ENCODE measurements at regions of chr3 and their contacts with region 1.

Region 1: DNA sequence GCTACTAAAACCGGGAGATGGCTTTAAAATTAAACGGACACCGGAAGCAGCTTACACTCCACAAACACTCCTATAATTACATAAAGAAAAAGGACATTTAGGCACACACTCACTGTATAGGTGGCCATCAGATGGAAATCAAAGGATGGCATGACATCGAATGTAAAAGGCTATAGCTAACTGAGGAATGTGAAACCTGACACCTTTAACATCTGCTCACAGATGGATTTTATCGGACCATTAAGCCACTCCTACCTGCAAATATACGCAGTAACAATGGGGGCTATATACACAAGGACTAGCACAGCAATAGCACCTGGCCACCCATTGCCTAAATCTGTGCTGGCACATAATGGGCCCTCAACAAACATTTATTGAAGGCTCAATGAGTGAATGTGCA is 14.5 kb upstream of the RBSN start:
- DNase-seq: no peak
- ATAC-seq: no peak
- H3K4me3 ChIP-seq: no peak overlapping the region
- H3K27ac ChIP-seq: no peak overlapping the region
- H3K4me1 ChIP-seq: peaks cover 0 to 2% (median 0%) of the 10 kb centered on the region in 9 donors
- H3K27me3 ChIP-seq: peaks cover 0 to 10% (median 0%) of the 10 kb centered on the region in 7 donors
- CTCF ChIP-seq: no peak

Region 2: GRCh38 chr3:15171096-15171495 is 57.6 kb after region 1 on chr3:
- intact Hi-C with region 1: loop called in 1 of 10 experiments (anchors 10 kb)
- DNase-seq: no peak
- ATAC-seq: no peak
- H3K4me3 ChIP-seq: no peak overlapping the region
- H3K27ac ChIP-seq: no peak overlapping the region
- H3K4me1 ChIP-seq: peaks cover 0 to 5% (median 0%) of the 10 kb centered on the region in 9 donors
- H3K27me3 ChIP-seq: peaks cover 0 to 6% (median 0%) of the 10 kb centered on the region in 7 donors
- CTCF ChIP-seq: no peak

Region 3: DNA sequence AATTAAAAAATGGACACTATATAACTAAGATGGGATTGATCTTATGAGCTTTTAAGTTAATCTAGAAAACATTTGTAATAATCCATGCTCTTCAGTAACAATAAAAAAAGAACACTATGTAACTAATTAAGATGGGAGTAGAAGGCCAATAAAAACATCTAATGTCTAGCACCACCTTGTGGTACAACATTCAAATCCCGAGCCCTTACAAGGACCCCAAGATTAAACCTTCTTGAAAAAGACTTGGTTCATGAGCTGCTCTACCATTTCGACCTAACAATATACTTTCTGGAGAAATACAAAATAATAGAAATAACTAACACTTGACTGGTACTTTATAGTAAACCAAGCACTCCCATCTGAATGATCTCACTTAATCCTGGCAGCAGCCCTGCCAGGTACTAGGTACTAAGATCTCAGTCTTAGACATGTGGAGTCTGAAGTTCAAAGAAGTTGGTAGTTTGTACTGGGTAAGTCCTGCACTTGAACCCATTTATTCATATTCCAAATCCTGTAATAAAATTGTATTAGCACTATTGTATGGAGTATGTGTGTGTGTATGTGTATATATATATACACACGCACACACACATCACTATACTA is 292.1 kb after region 1 on chr3:
- intact Hi-C with region 1: loop called in 2 of 10 experiments (anchors 10 kb)
- DNase-seq: no peak
- ATAC-seq: peak in 5 of 8 donors; percentile 49 to 75 (median 60)
- H3K4me3 ChIP-seq: no peak overlapping the region
- H3K27ac ChIP-seq: no peak overlapping the region
- H3K4me1 ChIP-seq: peaks cover 0 to 36% (median 0%) of the 10 kb centered on the region in 9 donors
- H3K27me3 ChIP-seq: no peaks in the 10 kb centered on the region
- CTCF ChIP-seq: peak; percentile 31 to 77 (median 66)

Region 4: GRCh38 chr3:15427182-15427880 is 313.9 kb after region 1 on chr3 and contains the starts of genes EAF1 and METTL6:
- intact Hi-C with region 1: no loop called
- DNase-seq: peak; percentile 84
- ATAC-seq: peak; percentile 92 to 97 (median 94)
- H3K4me3 ChIP-seq: peak within 1 kb of the TSS; percentile 75 to 100 (median 90)
- H3K27ac ChIP-seq: peak within 1 kb of the TSS; percentile 21 to 96 (median 86)
- H3K4me1 ChIP-seq: peaks cover 5 to 62% (median 39%) of the 10 kb centered on the region in 9 donors
- H3K27me3 ChIP-seq: no peaks in the 10 kb centered on the region
- CTCF ChIP-seq: peak in 6 of 9 donors; percentile 24 to 35 (median 27)
- total RNA-seq, gene EAF1: 7.0 to 12.4 (median 8.5) TPM
- total RNA-seq, gene METTL6: 7.1 to 11.3 (median 9.4) TPM

Region 5: GRCh38 chr3:15460891-15461531 is 347.5 kb after region 1 on chr3:
- intact Hi-C with region 1: no loop called
- DNase-seq: no peak
- ATAC-seq: no peak
- H3K4me3 ChIP-seq: no peak overlapping the region
- H3K27ac ChIP-seq: no peak overlapping the region
- H3K4me1 ChIP-seq: no peaks in the 10 kb centered on the region
- H3K27me3 ChIP-seq: no peaks in the 10 kb centered on the region
- CTCF ChIP-seq: no peak

Region 6: DNA sequence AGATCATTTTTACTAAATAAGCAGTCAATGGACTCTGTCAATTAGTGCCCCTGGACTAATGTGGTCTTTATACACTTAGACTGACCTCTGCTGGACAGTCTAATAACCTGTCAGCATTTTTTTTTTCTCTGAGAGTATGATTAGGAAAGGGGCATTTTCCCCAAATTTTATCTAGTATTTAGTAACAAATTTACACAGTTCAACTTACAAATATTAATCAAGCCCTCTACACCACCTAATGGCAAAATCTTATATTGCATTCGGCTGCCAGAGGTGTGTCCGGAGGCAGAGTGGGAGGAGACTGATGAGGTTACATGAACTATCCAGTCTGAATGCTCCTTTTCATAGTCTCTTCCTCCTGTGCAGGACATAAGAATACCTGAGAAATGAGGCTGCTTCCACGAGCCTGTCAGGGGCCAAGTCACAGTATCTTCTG is 444.1 kb after region 1 on chr3:
- intact Hi-C with region 1: loop called in 1 of 10 experiments (anchors 10 kb)
- DNase-seq: peak in 1 of 2 donors; percentile 55
- ATAC-seq: peak; percentile 59 to 83 (median 75)
- H3K4me3 ChIP-seq: no peak overlapping the region
- H3K27ac ChIP-seq: peak overlapping the region in 1 of 10 donors; percentile 73
- H3K4me1 ChIP-seq: peaks cover 0 to 15% (median 0%) of the 10 kb centered on the region in 9 donors
- H3K27me3 ChIP-seq: no peaks in the 10 kb centered on the region
- CTCF ChIP-seq: peak; percentile 40 to 76 (median 68)

Measured in heart right ventricle (tissue), 16 donors.